ENCODE measurements at regions of chr10 and their contacts with region 1.

Region 1: GRCh38 chr10:26881600-26882331 is 21.0 kb upstream of the ABI1 start:
- DNase-seq: no peak
- ATAC-seq: peak in 7 of 8 donors; percentile 65 to 84 (median 79)
- H3K4me3 ChIP-seq: no peak overlapping the region
- H3K27ac ChIP-seq: no peak overlapping the region
- H3K4me1 ChIP-seq: no peaks in the 10 kb centered on the region
- H3K27me3 ChIP-seq: peaks cover 0 to 54% (median 24%) of the 10 kb centered on the region in 7 donors
- CTCF ChIP-seq: peak; percentile 33 to 82 (median 66)

Region 2: DNA sequence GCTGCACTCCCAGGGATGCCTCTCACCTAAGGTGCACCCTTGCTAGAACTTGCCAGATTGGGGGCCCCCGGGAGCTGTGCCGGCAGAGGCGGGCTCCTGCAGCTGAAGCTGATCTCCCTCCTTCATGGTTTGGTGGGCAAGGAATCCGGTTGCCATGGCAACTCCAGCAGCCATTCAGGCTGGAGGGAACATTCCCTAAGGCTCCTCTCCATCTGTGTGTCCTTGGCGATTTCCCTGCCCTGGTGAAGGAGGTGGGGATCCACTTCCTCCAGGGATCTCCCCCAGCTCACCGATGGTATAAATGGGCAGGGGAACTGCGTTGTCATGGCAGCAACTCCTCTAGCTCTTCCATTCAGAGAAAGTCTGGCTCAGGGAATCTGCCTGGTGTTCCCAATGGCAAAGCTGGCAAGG is 1756.6 kb before region 1 on chr10:
- intact Hi-C with region 1: loop called in 1 of 10 experiments (anchors 5 kb)
- DNase-seq: no peak
- ATAC-seq: no peak
- H3K4me3 ChIP-seq: no peak overlapping the region
- H3K27ac ChIP-seq: no peak overlapping the region
- H3K4me1 ChIP-seq: no peaks in the 10 kb centered on the region
- H3K27me3 ChIP-seq: peaks cover 0 to 8% (median 0%) of the 10 kb centered on the region in 7 donors
- CTCF ChIP-seq: no peak

Region 3: GRCh38 chr10:25565570-25565969 is 1316.2 kb before region 1 on chr10:
- intact Hi-C with region 1: no loop called
- DNase-seq: no peak
- ATAC-seq: no peak
- H3K4me3 ChIP-seq: no peak overlapping the region
- H3K27ac ChIP-seq: no peak overlapping the region
- H3K4me1 ChIP-seq: no peaks in the 10 kb centered on the region
- H3K27me3 ChIP-seq: no peaks in the 10 kb centered on the region
- CTCF ChIP-seq: no peak

Region 4: GRCh38 chr10:26334932-26335573 is 546.7 kb before region 1 on chr10:
- intact Hi-C with region 1: loop called in 1 of 10 experiments (anchors 10 kb)
- DNase-seq: peak in 1 of 2 donors; percentile 30
- ATAC-seq: peak in 6 of 8 donors; percentile 51 to 80 (median 63)
- H3K4me3 ChIP-seq: peak overlapping the region in 2 of 10 donors; percentile 13 to 45
- H3K27ac ChIP-seq: peak overlapping the region in 1 of 10 donors; percentile 52
- H3K4me1 ChIP-seq: peaks cover 0 to 4% (median 0%) of the 10 kb centered on the region in 9 donors
- H3K27me3 ChIP-seq: no peaks in the 10 kb centered on the region
- CTCF ChIP-seq: peak; percentile 31 to 75 (median 63)

Region 5: GRCh38 chr10:26682931-26683330 is 198.8 kb before region 1 on chr10:
- intact Hi-C with region 1: loop called in 5 of 10 experiments (anchors 5 to 10 kb)
- DNase-seq: no peak
- ATAC-seq: no peak
- H3K4me3 ChIP-seq: no peak overlapping the region
- H3K27ac ChIP-seq: no peak overlapping the region
- H3K4me1 ChIP-seq: peaks cover 0 to 5% (median 0%) of the 10 kb centered on the region in 9 donors
- H3K27me3 ChIP-seq: peaks cover 0 to 46% (median 3%) of the 10 kb centered on the region in 7 donors
- CTCF ChIP-seq: no peak

Region 6: GRCh38 chr10:26689399-26689798 is 192.4 kb before region 1 on chr10:
- intact Hi-C with region 1: loop called in 5 of 10 experiments (anchors 5 to 10 kb)
- DNase-seq: no peak
- ATAC-seq: no peak
- H3K4me3 ChIP-seq: no peak overlapping the region
- H3K27ac ChIP-seq: no peak overlapping the region
- H3K4me1 ChIP-seq: peaks cover 0 to 20% (median 0%) of the 10 kb centered on the region in 9 donors
- H3K27me3 ChIP-seq: peaks cover 0 to 45% (median 18%) of the 10 kb centered on the region in 7 donors
- CTCF ChIP-seq: no peak

Region 7: GRCh38 chr10:26725837-26726727 is 155.7 kb before region 1 on chr10:
- intact Hi-C with region 1: loop called (anchors 1 to 5 kb)
- DNase-seq: peak; percentile 45 to 68
- ATAC-seq: peak in 5 of 8 donors; percentile 59 to 74 (median 67)
- H3K4me3 ChIP-seq: no peak overlapping the region
- H3K27ac ChIP-seq: no peak overlapping the region
- H3K4me1 ChIP-seq: peaks cover 0 to 6% (median 0%) of the 10 kb centered on the region in 9 donors
- H3K27me3 ChIP-seq: no peaks in the 10 kb centered on the region
- CTCF ChIP-seq: peak; percentile 64 to 89 (median 82)

Region 8: GRCh38 chr10:27285108-27285507 is 403.3 kb after region 1 on chr10:
- intact Hi-C with region 1: no loop called
- DNase-seq: peak in 1 of 2 donors; percentile 26
- ATAC-seq: peak in 4 of 8 donors; percentile 46 to 66 (median 58)
- H3K4me3 ChIP-seq: no peak overlapping the region
- H3K27ac ChIP-seq: no peak overlapping the region
- H3K4me1 ChIP-seq: no peaks in the 10 kb centered on the region
- H3K27me3 ChIP-seq: no peaks in the 10 kb centered on the region
- CTCF ChIP-seq: peak in 7 of 9 donors; percentile 38 to 63 (median 44)